Mammary epithelial cell (primary cell): ENCODE measurements at regions of chr3 and their contacts with region 1.

Region 1: DNA sequence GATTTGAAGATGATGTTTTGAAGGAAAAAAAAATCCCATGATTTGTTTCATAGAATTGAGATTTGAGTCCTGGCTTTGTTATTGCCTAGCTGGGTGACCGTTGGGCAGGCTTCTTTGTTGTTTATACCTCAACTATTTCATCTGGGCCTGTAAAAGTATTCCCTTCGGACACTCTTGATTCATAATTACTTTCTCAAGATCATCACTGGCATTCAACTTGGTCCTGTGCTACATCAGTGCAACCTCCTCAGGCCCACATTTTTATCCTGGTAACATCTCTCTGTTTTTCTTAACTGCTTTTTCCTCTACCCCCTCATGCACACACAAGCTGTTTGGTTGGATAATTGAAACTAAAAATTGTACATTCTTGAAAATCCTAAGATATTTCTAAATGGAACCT is 67.5 kb upstream of the P3H2 start:
- DNase-seq: no peak
- H3K4me3 ChIP-seq: no peak overlapping the region
- H3K27ac ChIP-seq: no peak overlapping the region
- H3K4me1 ChIP-seq: peaks cover 15% of the 10 kb centered on the region
- H3K27me3 ChIP-seq: no peaks in the 10 kb centered on the region
- CTCF ChIP-seq: no peak

Region 2: GRCh38 chr3:189967254-189967865 is 220.8 kb before region 1 on chr3:
- CTCF ChIA-PET with region 1: no interaction called
- dilution Hi-C with region 1: loop called (anchors 5 kb)
- in situ Hi-C with region 1: no loop called
- intact Hi-C with region 1: no loop called
- DNase-seq: peak; percentile 41
- H3K4me3 ChIP-seq: no peak overlapping the region
- H3K27ac ChIP-seq: no peak overlapping the region
- H3K4me1 ChIP-seq: peaks cover 6% of the 10 kb centered on the region
- H3K27me3 ChIP-seq: no peaks in the 10 kb centered on the region
- CTCF ChIP-seq: peak; percentile 69 to 90